Psoas muscle (tissue), 8 donors: ENCODE measurements at regions of chr20 and their contacts with region 1.

Region 1: DNA sequence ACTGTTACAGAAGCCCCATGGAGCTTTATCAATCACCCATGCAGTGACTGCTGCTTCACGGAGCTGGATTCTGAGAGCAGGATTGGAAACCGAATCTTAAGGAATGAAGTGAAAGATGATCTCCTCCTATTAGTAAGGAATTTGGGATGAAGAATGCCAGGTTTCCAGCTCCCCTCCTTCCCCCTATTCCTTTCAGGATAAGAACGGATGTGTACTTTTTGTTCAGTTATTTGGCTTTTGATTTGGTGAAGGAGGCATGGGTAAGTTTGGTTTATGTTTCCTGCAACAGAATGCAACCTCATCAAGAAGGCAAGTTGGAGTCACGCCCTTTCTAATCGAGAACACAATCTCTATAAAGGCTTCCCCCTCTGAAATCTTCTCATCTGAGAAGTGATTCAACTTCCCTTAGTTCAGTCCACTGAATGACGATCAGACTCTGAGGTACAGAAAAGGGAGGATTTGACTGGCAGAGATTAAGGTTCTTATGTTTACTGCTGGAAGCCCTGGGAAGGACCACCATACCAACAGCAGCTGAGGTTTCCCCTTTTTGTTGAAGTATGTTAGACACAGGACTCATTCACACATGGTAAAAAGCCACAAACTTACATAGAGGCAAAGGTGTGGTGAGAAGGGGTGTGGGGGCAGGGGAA is 5.5 kb downstream of the ELMO2 start:
- DNase-seq: no peak
- ATAC-seq: peak in 3 of 4 donors; percentile 28 to 48 (median 42)
- H3K4me3 ChIP-seq: peak overlapping the region; percentile 47
- H3K27ac ChIP-seq: peak overlapping the region; percentile 86
- H3K4me1 ChIP-seq: peaks cover 58% of the 10 kb centered on the region
- H3K27me3 ChIP-seq: no peaks in the 10 kb centered on the region
- CTCF ChIP-seq: no peak

Region 2: DNA sequence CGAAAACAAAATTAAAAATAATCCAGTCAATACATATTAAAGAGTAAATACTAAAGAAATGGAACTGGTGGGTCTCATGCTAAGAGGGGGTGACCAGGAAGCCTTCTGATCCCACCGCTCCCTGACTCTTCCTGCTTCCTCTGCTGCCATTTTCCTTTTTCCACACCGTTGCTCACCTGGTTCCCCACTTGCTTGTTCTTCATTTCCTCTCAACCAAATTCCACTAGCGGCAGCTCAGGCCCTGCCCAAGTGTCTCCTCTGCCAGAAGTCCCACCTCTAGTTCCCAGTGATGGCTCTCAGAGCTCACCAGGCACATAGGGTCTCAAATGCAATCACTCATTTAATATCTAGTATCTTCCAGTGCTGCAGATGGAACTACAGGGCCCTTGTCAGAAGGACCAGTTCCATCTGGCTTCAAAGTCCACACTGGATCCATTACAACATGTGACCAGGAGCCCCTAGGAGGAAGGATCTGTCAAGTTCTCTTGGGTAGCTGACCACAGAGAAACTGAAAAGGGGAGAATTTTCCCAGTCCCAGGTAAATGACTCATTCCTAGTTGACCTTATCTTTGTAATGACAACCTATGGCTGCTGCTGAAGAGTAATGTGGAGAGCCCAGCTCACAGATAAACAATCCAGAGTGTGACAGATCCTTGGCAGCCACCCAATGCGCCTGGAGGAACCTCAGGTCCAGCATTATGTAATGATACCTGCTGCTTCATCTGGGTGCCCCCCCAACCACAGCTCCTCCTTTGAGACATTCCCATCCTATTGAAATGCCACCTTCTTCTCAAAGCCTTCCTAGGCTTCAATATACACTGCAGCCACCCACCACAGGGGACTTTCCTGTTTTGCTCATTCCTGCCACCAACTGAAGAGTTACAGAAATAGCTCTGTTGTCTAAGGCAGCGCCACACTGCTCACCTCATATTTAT is 32.7 kb before region 1 on chr20:
- intact Hi-C with region 1: loop called in 1 of 2 experiments (anchors 5 kb)
- DNase-seq: no peak
- ATAC-seq: no peak
- H3K4me3 ChIP-seq: no peak overlapping the region
- H3K27ac ChIP-seq: peak overlapping the region; percentile 32
- H3K4me1 ChIP-seq: peaks cover 16% of the 10 kb centered on the region
- H3K27me3 ChIP-seq: no peaks in the 10 kb centered on the region
- CTCF ChIP-seq: no peak

Region 3: DNA sequence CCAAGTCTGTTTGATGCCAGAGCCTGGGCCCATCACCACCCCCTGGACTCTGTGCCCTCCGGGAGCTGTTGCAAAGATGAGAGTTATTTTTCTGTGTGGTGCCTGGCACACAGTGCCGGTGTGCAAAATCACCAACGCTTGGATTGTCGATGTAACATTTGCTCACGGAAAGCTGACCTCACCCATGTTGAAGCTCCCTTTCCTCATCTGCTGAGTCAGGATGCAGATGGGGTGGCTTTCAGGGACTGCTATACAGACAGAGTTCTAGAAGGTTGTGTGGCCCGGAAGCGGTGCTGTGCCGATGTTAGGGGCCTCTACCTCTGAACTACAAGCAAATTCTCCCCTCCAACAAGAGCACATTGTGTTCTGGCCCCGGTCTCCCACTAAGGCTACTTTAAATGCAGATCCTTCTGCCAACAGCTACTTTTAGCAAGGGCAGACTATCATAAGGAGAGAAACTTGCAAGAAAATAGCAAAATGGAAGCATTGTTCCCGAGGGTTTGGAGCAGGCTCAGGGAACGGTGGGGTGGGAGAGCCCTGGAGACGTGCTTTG is 527.7 kb after region 1 on chr20:
- intact Hi-C with region 1: no loop called
- DNase-seq: peak; percentile 41 to 74
- ATAC-seq: peak in 2 of 4 donors; percentile 31
- H3K4me3 ChIP-seq: no peak overlapping the region
- H3K27ac ChIP-seq: no peak overlapping the region
- H3K4me1 ChIP-seq: no peaks in the 10 kb centered on the region
- H3K27me3 ChIP-seq: peaks cover 0 to 2% (median 0%) of the 10 kb centered on the region in 3 donors
- CTCF ChIP-seq: no peak